ENCODE measurements at regions of chr1 and their contacts with region 1.

Region 1: DNA sequence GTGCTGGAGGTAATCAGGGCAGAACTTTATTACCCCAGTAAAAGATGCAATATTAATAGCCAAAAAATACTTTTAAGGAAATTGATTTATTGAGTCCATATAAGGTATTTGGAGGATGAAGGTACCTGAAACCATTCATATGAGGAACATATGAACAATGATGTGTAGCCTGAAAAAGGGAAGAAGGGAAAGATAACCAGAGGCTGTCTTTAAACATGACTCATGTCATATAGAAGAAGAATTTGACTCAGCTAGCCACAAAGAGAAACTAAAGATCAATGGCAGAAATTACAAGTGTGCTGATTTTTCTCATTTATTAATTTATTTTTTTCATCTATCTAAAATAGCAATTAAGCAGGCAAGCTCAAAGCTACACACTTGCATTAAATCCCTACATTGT is 136.2 kb upstream of the DUSP10 start:
- DNase-seq: no peak
- H3K4me3 Mint-ChIP-seq: no peak overlapping the region
- H3K27ac Mint-ChIP-seq: no peak overlapping the region
- H3K4me1 Mint-ChIP-seq: peaks cover 9% of the 10 kb centered on the region
- H3K27me3 Mint-ChIP-seq: peaks cover 11% of the 10 kb centered on the region

Region 2: GRCh38 chr1:221766210-221766609 is 111.9 kb before region 1 on chr1:
- CTCF ChIA-PET with region 1: no interaction called
- intact Hi-C with region 1: no loop called
- DNase-seq: no peak
- H3K4me3 Mint-ChIP-seq: no peak overlapping the region
- H3K27ac Mint-ChIP-seq: no peak overlapping the region
- H3K4me1 Mint-ChIP-seq: peaks cover 13% of the 10 kb centered on the region
- H3K27me3 Mint-ChIP-seq: no peaks in the 10 kb centered on the region

Region 3: DNA sequence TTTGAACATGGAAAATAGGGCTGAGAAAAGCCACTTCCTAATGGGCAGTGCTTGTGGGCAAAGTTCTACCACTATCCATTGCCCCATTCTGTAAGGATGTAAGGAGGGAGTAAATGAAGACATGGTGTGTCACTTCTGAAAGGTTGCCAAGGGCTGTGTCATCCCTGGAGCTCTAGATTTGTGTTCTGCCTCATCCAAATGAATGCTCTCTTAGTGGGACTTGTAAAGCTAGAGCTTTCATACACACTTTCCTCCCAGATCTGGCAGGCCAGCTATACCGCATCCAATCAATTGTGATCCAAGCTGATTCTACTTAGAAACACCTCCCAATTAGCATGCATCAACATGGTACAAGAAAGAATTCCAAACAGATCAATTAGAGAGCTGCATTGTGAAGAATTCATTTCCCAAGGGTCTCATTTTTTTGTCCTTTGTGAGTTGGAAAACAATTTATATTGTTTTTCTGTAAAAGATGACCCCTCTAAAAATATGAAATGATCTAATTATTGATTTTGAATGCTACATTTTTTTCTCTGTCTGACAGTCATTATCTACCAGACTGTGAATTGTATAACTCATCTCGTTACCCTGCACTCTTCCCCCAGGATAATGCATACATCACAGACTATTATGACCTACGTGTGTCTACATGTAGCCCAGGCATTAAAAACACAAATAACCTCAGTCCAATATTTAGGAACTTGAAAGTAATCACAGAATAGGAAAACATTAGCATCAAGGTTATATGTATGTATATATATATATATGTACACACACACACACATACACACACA is 19.1 kb before region 1 on chr1:
- CTCF ChIA-PET with region 1: no interaction called
- intact Hi-C with region 1: no loop called
- DNase-seq: no peak
- H3K4me3 Mint-ChIP-seq: no peak overlapping the region
- H3K27ac Mint-ChIP-seq: no peak overlapping the region
- H3K4me1 Mint-ChIP-seq: peaks cover 11% of the 10 kb centered on the region
- H3K27me3 Mint-ChIP-seq: no peaks in the 10 kb centered on the region

Region 4: DNA sequence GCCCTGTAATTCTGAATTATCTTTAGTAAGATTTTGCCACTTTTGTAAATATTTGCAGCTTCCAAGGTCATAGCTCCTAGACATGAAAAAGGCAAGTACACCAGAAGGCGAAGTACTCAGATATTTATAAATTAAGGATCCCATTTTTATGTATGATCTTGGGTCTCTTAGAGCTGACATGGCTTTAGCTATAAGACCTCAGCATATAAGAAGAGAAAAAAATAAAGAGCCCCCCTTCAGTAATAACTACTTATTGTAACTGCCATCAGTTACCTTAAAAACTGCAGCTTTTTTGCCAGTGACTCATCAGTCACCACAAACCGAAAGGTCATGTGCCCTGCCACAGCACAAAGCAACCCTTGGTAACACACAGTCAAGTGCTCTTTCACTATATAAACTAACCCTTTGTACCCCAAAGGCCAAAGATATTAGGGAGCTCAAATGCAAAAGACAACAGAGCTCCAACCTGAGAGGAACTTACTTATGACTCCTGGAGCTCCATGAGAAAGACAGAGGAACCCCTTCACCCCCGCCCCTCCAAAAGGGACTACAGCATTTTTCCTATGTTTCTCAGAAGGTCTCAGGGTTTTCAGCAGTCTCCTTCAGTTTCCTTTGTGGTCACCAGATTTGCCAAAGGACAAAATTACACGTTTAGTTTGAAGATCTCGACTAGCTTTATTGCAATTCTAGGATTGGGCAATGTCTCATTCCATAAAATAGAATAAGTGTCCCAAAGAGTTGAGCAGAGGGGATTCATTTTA is 83.6 kb after region 1 on chr1:
- CTCF ChIA-PET with region 1: no interaction called
- intact Hi-C with region 1: loop called (anchors 2 kb)
- DNase-seq: peak; percentile 74
- H3K4me3 Mint-ChIP-seq: no peak overlapping the region
- H3K27ac Mint-ChIP-seq: peak overlapping the region; percentile 46
- H3K4me1 Mint-ChIP-seq: peaks cover 17% of the 10 kb centered on the region
- H3K27me3 Mint-ChIP-seq: no peaks in the 10 kb centered on the region

Region 5: GRCh38 chr1:222182641-222183040 is 304.5 kb after region 1 on chr1:
- CTCF ChIA-PET with region 1: no interaction called
- intact Hi-C with region 1: no loop called
- DNase-seq: no peak
- H3K4me3 Mint-ChIP-seq: no peak overlapping the region
- H3K27ac Mint-ChIP-seq: no peak overlapping the region
- H3K4me1 Mint-ChIP-seq: no peaks in the 10 kb centered on the region
- H3K27me3 Mint-ChIP-seq: no peaks in the 10 kb centered on the region